Sigmoid colon (tissue), 7 donors: ENCODE measurements at regions of chr3 and their contacts with region 1.

Region 1: DNA sequence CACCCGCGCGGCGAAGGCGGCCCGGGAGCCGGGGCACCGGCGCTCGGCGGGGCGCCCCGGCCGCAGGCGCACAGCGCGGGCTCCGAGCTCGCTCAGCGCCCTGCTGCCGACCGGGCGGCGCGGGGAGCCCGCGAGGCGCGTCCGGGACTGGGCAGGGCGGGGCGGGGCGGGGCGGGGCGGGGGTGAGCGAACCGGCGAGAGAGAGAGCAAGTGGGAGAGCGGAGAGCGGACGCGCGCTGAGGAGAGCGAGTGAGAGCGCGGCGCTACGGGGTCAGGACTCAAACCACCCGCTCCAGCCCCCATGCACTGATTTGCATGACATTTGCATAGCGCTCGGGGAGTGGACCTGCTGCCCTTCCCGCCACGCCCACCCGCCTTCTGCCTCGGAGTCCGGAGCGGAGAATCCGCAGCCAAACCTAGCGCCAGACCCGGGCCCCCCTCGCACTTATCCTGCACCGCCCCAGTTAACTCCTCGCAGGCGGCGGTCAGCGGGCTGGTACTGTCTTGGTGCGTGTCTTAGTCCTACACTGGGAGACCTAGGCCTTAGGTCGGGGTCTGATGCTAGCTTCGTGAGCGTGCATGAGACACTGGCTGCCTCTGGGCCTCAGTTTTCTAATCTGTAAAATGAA is at the start of gene MYLK:
- DNase-seq: peak; percentile 88
- H3K4me3 ChIP-seq: peak within 1 kb of the TSS; percentile 37 to 65 (median 48)
- H3K27ac ChIP-seq: peak within 1 kb of the TSS; percentile 46 to 78 (median 67)
- H3K4me1 ChIP-seq: peaks cover 0 to 13% (median 5%) of the 10 kb centered on the region in 4 donors
- H3K27me3 ChIP-seq: no peaks in the 10 kb centered on the region
- CTCF ChIP-seq: no peak
- EP300 ChIP-seq: no peak
- POLR2A ChIP-seq: no peak
- total RNA-seq, gene MYLK: 1,169 to 2,153 (median 1,962) TPM

Region 2: DNA sequence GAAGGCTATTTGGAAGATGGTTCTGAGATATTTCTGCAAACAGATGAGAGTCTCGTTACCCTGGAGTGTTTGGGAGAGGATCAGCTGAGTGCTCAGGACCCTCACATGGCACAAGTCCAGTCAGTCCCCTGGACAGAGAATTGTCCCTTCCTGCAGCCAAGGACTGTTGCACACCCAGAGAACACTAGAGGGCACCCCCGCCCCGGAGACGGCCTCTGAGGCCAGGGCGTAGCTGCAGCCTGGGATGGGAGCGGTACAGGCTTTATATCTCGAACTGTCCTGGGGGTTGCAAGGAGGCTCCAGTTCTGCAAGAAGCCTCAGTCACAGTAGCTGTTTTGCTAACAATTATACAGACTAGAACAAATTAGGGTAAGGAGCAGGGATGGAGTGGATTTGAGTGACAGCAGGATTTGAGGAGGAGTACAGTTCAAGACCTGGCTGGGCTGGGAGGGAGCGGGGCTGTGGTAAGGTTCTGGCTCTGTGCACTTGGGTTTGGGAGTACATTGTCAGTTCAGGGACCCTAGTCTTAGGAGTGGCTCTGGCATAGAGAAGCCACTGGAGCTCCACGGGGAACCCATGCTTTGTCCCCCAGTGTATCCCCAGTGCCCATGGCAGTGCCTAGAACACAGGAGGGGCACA is 231.9 kb before region 1 on chr3:
- intact Hi-C with region 1: loop called (anchors 10 kb)
- DNase-seq: peak; percentile 91
- H3K4me3 ChIP-seq: no peak overlapping the region
- H3K27ac ChIP-seq: peak overlapping the region; percentile 89 to 98 (median 94)
- H3K4me1 ChIP-seq: peaks cover 0 to 99% (median 92%) of the 10 kb centered on the region in 4 donors
- H3K27me3 ChIP-seq: no peaks in the 10 kb centered on the region
- CTCF ChIP-seq: peak in 2 of 4 experiments; percentile 79 to 86
- EP300 ChIP-seq: no peak
- POLR2A ChIP-seq: no peak

Region 3: GRCh38 chr3:123745184-123745855 is 139.0 kb before region 1 on chr3:
- intact Hi-C with region 1: loop called (anchors 10 kb)
- DNase-seq: no peak
- H3K4me3 ChIP-seq: no peak overlapping the region
- H3K27ac ChIP-seq: no peak overlapping the region
- H3K4me1 ChIP-seq: peaks cover 0 to 40% (median 24%) of the 10 kb centered on the region in 4 donors
- H3K27me3 ChIP-seq: no peaks in the 10 kb centered on the region
- CTCF ChIP-seq: no peak
- EP300 ChIP-seq: no peak
- POLR2A ChIP-seq: no peak